Aorta (tissue), 5 donors: ENCODE measurements at regions of chr17 and their contacts with region 1.

Region 1: GRCh38 chr17:45265821-45266220 is 3.9 kb upstream of the SPATA32 start:
- DNase-seq: no peak
- ATAC-seq: no peak
- H3K4me3 ChIP-seq: no peak overlapping the region
- H3K27ac ChIP-seq: no peak overlapping the region
- H3K4me1 ChIP-seq: no peaks in the 10 kb centered on the region
- H3K27me3 ChIP-seq: no peaks in the 10 kb centered on the region

Region 2: DNA sequence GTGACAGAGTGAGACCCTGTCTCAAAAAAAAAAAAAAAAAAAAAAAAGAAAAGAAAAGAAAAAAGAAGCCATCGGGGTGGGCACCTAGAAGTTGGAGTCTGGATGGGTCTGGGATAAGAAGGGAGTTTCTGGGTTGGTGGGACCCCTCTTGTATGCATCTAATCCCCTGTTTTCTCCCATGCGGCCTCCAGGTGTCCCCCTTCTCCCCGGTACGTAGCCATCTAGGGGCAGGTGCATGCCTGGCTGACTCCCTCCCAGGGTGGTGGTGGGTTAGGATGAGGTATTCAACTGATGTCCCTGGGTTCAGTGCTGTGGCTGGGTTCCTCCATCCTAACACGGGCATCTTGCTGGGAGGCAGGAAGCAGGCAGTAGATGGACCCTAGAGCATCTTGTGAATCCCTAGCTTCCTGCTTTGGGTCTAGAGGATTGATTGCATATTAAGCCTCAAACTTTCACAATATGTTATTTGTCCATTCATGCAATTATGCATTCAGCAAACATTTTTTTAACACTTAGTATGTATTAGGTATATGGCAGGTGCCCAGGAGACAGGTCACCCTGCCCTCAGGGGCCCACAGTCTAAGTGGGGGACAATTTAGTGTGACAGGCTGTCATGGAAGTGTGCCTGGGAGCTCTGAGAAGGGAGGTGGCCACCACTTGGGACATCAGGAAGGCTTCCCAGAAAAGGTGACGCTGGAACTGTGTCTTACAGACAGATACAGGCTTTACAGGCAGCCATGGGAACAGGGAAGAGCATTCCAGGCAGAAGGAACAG is 31.0 kb before region 1 on chr17:
- intact Hi-C with region 1: loop called in 1 of 2 experiments (anchors 5 kb)
- DNase-seq: no peak
- ATAC-seq: no peak
- H3K4me3 ChIP-seq: no peak overlapping the region
- H3K27ac ChIP-seq: no peak overlapping the region
- H3K4me1 ChIP-seq: no peaks in the 10 kb centered on the region
- H3K27me3 ChIP-seq: no peaks in the 10 kb centered on the region